ENCODE measurements at regions of chr7 and their contacts with region 1.

Region 1: DNA sequence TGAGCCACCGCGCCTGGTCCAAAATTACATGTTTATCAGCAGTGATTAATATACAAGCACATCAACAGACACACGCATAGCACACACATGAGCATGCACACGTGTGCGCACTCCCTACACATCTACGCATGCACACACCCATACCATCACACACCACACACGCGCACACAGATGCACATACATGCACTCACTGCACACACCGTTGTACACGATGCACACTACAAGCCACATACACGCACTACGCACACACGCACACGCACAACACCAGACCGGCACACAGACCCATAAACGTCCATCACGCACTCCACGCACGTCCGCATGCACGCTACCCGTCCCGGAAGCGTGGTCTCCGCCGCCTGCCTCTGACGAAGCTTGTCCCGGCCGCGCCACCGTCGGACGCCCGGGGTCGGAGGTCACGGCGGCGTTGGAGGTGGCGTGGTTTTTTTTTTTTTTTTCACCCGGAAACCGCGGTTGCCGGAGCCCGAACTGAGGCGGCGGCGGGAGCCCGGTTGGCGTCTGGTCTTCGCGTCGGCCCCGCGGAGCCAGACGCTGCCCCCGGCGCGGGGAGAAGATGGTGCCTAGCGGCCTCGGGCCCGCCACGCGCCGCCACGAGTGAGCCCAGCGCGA is at the start of gene TMEM248:
- DNase-seq: peak; percentile 95
- H3K4me3 ChIP-seq: peak within 1 kb of the TSS; percentile 89
- H3K27ac ChIP-seq: peak within 1 kb of the TSS; percentile 81
- H3K4me1 ChIP-seq: peaks cover 7% of the 10 kb centered on the region
- H3K27me3 ChIP-seq: no peaks in the 10 kb centered on the region
- CTCF ChIP-seq: no peak
- total RNA-seq, gene TMEM248: 108 to 122 TPM

Region 2: DNA sequence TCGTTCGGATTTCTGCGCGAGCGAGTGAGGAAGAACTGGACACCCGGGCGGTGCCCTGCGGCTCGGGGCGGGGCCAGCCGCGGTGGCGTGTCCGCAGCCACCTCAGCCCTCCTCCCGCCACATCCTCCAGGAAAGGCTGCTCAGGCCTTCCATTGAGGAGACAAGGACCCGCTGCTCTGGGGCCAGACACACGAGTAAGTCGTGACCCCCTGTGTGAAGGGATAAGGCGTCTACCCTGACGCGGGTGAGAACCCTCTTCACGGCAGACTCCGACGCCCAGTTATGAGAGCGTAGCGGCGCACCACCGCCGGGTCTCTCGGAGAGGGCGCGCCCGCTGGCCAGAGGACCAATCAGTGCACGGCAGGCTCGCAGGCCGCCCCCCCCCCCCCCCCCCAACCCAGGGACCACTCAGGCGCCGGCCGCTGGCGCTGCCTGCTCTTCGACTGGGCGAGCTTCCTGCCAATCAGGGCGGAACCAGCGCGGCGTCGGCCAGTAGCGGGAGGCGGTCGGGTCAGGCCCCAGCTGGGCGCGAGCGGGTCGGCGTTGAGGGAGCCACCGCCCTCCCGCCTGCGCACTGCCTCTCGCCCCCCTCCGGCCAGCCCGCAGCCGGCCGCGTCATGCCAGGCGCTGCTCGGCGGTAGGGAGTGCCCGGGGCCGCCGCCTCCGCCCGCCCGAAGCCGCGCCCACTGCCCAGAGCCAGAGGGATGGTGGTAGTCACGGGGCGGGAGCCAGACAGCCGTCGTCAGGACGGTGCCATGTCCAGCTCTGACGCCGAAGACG is 292.3 kb before region 1 on chr7 and contains the start of gene KCTD7:
- intact Hi-C with region 1: no loop called
- DNase-seq: peak; percentile 97
- H3K4me3 ChIP-seq: peak within 1 kb of the TSS; percentile 64
- H3K27ac ChIP-seq: peak within 1 kb of the TSS; percentile 88
- H3K4me1 ChIP-seq: peaks cover 7% of the 10 kb centered on the region
- H3K27me3 ChIP-seq: no peaks in the 10 kb centered on the region
- CTCF ChIP-seq: no peak
- total RNA-seq, gene KCTD7: 4.1 to 6.1 TPM

Region 3: DNA sequence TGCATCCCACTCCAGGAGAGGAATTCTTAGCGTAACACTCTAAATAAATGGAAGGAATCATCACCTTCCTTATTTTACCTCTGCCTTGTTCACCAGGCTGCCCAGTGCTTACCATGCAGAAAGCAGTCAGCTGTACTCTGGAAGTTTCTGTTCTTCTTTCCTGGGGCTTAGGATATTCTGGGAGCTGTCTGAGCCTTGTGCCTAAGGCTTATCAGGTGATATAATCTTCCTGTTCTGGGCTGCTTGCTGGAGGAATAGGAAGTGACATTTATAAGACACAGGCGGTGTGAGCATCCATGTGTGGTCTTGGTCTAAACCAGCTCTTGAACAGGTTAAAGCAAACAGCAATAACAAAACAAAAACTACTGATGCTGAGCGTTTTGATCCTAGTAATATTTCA is 278.7 kb before region 1 on chr7:
- intact Hi-C with region 1: no loop called
- DNase-seq: no peak
- H3K4me3 ChIP-seq: no peak overlapping the region
- H3K27ac ChIP-seq: no peak overlapping the region
- H3K4me1 ChIP-seq: peaks cover 7% of the 10 kb centered on the region
- H3K27me3 ChIP-seq: no peaks in the 10 kb centered on the region
- CTCF ChIP-seq: no peak

Region 4: GRCh38 chr7:66844552-66845378 is 76.1 kb before region 1 on chr7:
- intact Hi-C with region 1: loop called (anchors 5 kb)
- DNase-seq: peak; percentile 99
- H3K4me3 ChIP-seq: peak overlapping the region; percentile 74
- H3K27ac ChIP-seq: peak overlapping the region; percentile 77
- H3K4me1 ChIP-seq: peaks cover 4% of the 10 kb centered on the region
- H3K27me3 ChIP-seq: no peaks in the 10 kb centered on the region
- CTCF ChIP-seq: no peak

Region 5: GRCh38 chr7:67022511-67022910 is 101.6 kb after region 1 on chr7:
- intact Hi-C with region 1: no loop called
- DNase-seq: no peak
- H3K4me3 ChIP-seq: no peak overlapping the region
- H3K27ac ChIP-seq: no peak overlapping the region
- H3K4me1 ChIP-seq: no peaks in the 10 kb centered on the region
- H3K27me3 ChIP-seq: no peaks in the 10 kb centered on the region
- CTCF ChIP-seq: no peak

Measured in colonic mucosa (tissue), 4 donors.